ENCODE measurements at regions of chr19 and their contacts with region 1.

Region 1: DNA sequence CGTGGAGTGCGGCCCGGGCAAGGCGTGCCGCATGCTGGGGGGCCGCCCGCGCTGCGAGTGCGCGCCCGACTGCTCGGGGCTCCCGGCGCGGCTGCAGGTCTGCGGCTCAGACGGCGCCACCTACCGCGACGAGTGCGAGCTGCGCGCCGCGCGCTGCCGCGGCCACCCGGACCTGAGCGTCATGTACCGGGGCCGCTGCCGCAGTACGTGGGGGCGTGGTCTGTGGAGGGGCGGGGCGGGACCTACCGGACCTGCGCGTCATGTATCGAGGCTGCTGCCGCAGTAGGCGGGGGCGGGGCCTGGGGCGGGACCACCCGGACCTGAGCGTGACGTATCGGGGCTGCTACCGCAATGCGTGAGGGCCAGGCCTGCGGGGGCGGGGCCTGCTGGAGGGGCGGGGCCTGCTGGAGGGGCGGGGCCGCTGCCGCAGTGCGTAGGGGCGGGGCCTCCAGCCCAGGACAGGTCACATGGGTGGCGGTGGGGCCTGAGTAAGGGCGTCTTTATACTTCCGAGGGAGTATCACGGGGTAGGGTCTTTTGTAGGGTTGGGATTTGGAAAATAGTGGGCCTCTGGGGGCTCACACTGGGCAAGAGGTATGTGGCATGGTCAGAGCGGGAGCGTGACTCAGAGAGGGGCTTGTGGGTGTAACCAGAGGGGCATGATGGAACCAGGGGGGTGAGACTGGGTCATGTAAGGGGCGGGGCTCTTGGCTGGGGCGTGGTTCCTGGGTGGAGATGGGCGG is 4.3 kb downstream of the FSTL3 start:
- DNase-seq: peak; percentile 100
- H3K4me3 Mint-ChIP-seq: peak overlapping the region; percentile 94
- H3K27ac Mint-ChIP-seq: peak overlapping the region; percentile 99
- H3K4me1 Mint-ChIP-seq: peaks cover 11% of the 10 kb centered on the region
- H3K27me3 Mint-ChIP-seq: peaks cover 5% of the 10 kb centered on the region

Region 2: DNA sequence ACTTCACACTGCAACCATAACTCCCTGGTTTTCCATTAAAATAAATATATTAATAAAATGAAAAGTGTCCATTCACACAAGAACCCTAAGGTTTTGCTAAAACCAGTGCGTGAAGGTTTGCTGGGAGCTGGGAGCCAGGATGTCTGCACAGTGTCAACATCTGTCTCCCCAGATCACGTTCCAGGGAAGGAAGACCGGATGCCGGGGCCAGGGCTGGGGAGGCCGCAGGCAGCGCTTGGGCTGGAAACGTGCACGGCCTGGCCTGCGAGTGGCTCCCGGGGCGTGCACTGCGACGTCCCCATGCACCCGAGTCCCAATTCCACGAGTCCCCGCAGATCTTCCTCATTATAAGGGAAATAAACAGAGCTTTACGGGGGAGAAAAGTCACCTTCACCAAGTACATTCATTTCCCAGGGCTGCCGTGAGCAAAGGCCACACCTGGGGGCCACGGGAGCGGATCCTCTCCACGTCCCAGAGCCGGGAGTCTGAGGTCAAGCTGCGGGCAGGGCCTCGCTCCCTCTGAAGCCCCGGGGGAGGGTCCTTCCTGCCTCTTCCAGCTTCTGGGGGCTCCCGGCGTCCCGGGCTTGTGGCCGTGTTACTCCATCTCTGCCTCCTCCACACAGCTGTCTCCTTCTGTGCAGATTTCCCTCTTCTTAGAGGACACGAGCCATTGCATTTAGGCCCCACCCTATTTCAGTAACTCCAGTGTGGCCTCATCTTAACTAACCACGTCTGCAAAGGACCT is 232.5 kb before region 1 on chr19:
- CTCF ChIA-PET with region 1: no interaction called
- intact Hi-C with region 1: no loop called
- DNase-seq: no peak
- H3K4me3 Mint-ChIP-seq: no peak overlapping the region
- H3K27ac Mint-ChIP-seq: no peak overlapping the region
- H3K4me1 Mint-ChIP-seq: no peaks in the 10 kb centered on the region
- H3K27me3 Mint-ChIP-seq: no peaks in the 10 kb centered on the region

Region 3: GRCh38 chr19:703651-704446 is 23.4 kb after region 1 on chr19:
- CTCF ChIA-PET with region 1: interaction called, 3 read pairs
- intact Hi-C with region 1: loop called (anchors 1 kb)
- DNase-seq: peak; percentile 68
- H3K4me3 Mint-ChIP-seq: peak overlapping the region; percentile 4
- H3K27ac Mint-ChIP-seq: no peak overlapping the region
- H3K4me1 Mint-ChIP-seq: peaks cover 13% of the 10 kb centered on the region
- H3K27me3 Mint-ChIP-seq: peaks cover 24% of the 10 kb centered on the region

Region 4: DNA sequence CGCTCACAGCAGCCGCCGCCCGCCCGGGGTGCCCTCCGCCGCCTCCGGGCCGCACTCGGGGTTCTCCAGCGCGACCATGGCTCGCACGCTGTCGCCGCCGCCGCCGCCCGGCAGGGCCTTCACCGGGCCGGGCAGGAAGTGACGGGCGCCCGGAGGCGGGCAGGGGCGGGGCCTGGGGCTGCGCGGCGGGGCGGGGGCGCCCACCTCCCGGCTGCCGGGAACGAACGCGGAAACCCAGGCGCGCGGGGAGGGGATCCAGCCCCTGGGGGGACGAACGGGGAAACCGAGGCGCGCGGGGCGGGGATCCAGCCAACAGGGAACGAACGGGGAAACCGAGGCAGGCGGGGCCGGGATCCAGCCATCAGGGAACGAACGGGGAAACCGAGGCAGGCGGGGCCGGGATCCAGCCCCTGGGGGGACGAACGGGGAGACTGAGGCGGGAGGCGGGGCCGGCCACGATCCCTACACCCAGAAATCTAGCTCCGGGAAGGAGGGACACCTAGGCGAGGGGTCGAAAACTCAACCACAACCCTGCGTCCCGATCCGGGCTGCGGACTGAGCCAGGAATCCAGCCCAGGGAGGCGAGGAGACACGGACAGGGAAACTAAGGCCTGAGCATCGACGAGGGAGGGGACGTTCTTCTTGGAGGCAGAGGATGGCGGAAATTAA is 232.8 kb after region 1 on chr19 and contains the start of gene R3HDM4:
- CTCF ChIA-PET with region 1: no interaction called
- intact Hi-C with region 1: loop called (anchors 2 kb)
- DNase-seq: peak; percentile 88
- H3K4me3 Mint-ChIP-seq: peak within 1 kb of the TSS; percentile 84
- H3K27ac Mint-ChIP-seq: peak within 1 kb of the TSS; percentile 95
- H3K4me1 Mint-ChIP-seq: peaks cover 34% of the 10 kb centered on the region
- H3K27me3 Mint-ChIP-seq: peaks cover 2% of the 10 kb centered on the region
- total RNA-seq, gene R3HDM4: 111 to 120 TPM

Region 5: GRCh38 chr19:1103708-1104310 is 423.4 kb after region 1 on chr19 and contains the start of gene GPX4:
- CTCF ChIA-PET with region 1: no interaction called
- intact Hi-C with region 1: loop called (anchors 1 kb)
- DNase-seq: peak; percentile 99
- H3K4me3 Mint-ChIP-seq: peak within 1 kb of the TSS; percentile 72
- H3K27ac Mint-ChIP-seq: peak within 1 kb of the TSS; percentile 79
- H3K4me1 Mint-ChIP-seq: peaks cover 54% of the 10 kb centered on the region
- H3K27me3 Mint-ChIP-seq: no peaks in the 10 kb centered on the region
- total RNA-seq, gene GPX4: 244 to 253 TPM

Measured in activated naive CD4-positive, alpha-beta T cell treated with anti-CD3 and anti-CD28 coated beads for 36 hours (primary cell).